ENCODE measurements at regions of chr11 and their contacts with region 1.

Region 1: DNA sequence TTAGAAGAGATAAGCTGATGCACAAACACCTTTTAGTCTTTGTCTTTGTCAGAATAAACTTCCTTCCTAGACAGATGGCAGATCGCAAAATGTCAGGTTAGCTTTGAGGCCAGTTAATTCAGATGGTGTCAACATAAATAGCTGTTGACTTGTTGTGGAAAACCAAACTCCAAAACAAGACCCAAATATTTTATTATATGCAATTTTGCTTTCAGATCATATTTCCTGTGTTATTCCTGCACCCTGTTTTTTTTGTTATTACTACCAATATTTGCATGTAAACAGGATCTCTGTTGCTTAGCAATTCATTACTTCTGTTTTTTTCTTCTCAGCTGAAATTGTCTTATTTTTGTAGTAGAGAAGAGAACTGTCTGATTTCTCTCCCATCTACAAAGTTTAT is 316.0 kb downstream of the ETS1 start:
- DNase-seq: no peak
- ATAC-seq: peak; percentile 47
- H3K4me3 Mint-ChIP-seq: peak overlapping the region; percentile 39
- H3K27ac Mint-ChIP-seq: peak overlapping the region; percentile 88
- H3K4me1 Mint-ChIP-seq: peaks cover 61% of the 10 kb centered on the region
- H3K27me3 Mint-ChIP-seq: no peaks in the 10 kb centered on the region
- CTCF ChIP-seq: no peak

Region 2: GRCh38 chr11:128116885-128117284 is 154.5 kb before region 1 on chr11:
- CTCF ChIA-PET with region 1: no interaction called
- POLR2A ChIA-PET with region 1: no interaction called
- intact Hi-C with region 1: no loop called
- DNase-seq: no peak
- ATAC-seq: no peak
- H3K4me3 Mint-ChIP-seq: no peak overlapping the region
- H3K27ac Mint-ChIP-seq: no peak overlapping the region
- H3K4me1 Mint-ChIP-seq: no peaks in the 10 kb centered on the region
- H3K27me3 Mint-ChIP-seq: peaks cover 29% of the 10 kb centered on the region
- CTCF ChIP-seq: no peak

Region 3: GRCh38 chr11:128261011-128261421 is 10.4 kb before region 1 on chr11:
- CTCF ChIA-PET with region 1: interaction called, 4 read pairs
- POLR2A ChIA-PET with region 1: interaction called, 11 read pairs
- intact Hi-C with region 1: loop called (anchors 1 kb)
- DNase-seq: no peak
- ATAC-seq: peak; percentile 22
- H3K4me3 Mint-ChIP-seq: no peak overlapping the region
- H3K27ac Mint-ChIP-seq: peak overlapping the region; percentile 85
- H3K4me1 Mint-ChIP-seq: peaks cover 84% of the 10 kb centered on the region
- H3K27me3 Mint-ChIP-seq: no peaks in the 10 kb centered on the region
- CTCF ChIP-seq: no peak

Region 4: DNA sequence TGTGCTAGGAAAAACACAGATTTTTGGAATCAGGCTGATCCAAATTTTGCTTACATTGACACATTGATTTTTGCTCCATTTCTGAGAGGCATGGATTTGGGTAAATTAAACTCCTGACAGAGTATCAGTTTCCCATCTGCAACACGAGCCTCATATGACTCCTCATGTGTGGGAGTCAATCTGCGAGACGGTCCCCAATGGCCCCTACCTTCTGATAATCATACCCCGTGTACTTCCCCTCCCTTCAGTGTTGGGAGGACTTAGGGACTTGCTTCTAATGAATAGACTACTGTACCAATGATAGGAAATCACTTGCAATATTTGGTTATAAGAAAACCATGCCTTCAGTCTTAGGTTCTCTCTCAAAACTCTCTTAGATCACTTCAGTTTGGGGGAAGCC is 13.2 kb after region 1 on chr11:
- CTCF ChIA-PET with region 1: interaction called, 3 read pairs
- POLR2A ChIA-PET with region 1: interaction called, 4 read pairs
- intact Hi-C with region 1: loop called (anchors 1 kb)
- DNase-seq: no peak
- ATAC-seq: peak; percentile 48
- H3K4me3 Mint-ChIP-seq: no peak overlapping the region
- H3K27ac Mint-ChIP-seq: peak overlapping the region; percentile 57
- H3K4me1 Mint-ChIP-seq: peaks cover 56% of the 10 kb centered on the region
- H3K27me3 Mint-ChIP-seq: no peaks in the 10 kb centered on the region
- CTCF ChIP-seq: no peak

Region 5: GRCh38 chr11:128841461-128842072 is 570.2 kb after region 1 on chr11:
- CTCF ChIA-PET with region 1: no interaction called
- POLR2A ChIA-PET with region 1: no interaction called
- intact Hi-C with region 1: loop called (anchors 5 kb)
- DNase-seq: no peak
- ATAC-seq: peak; percentile 77
- H3K4me3 Mint-ChIP-seq: peak overlapping the region; percentile 36
- H3K27ac Mint-ChIP-seq: peak overlapping the region; percentile 86
- H3K4me1 Mint-ChIP-seq: peaks cover 100% of the 10 kb centered on the region
- H3K27me3 Mint-ChIP-seq: no peaks in the 10 kb centered on the region
- CTCF ChIP-seq: no peak

Region 6: DNA sequence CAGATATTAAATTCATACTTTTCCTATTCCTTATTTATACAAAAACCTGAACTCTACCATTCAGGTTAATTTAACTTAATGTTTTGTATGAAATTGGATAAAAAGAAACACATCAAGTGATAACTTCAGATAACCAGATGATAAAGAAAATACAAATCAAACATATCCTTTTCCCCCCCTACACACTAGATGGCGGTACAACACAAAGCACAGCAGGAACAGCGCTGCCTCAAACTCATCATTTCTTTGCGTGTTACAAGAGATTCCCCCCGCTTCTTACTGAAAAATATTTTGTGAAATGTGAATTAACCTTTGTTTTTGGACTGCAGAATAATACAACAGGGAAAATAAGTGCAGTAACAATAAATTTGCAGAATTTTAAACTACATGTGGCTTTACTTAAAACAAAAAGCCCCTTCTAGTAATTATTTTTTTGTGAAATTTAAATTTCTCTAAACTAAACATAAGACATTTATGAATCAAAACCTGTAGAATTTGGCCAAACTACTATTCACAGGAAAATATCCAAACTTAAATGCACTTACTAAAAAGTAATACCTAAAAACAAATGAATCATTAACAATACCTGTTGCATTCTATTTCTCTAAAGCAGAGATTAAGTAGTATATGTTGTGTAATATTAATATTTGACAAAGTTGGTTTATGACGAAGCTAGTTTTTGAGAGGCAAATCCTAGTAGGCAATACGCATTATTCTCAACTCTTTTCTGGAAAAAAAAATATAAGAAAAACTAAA is 846.4 kb after region 1 on chr11:
- CTCF ChIA-PET with region 1: no interaction called
- POLR2A ChIA-PET with region 1: no interaction called
- intact Hi-C with region 1: no loop called
- DNase-seq: no peak
- ATAC-seq: no peak
- H3K4me3 Mint-ChIP-seq: no peak overlapping the region
- H3K27ac Mint-ChIP-seq: no peak overlapping the region
- H3K4me1 Mint-ChIP-seq: no peaks in the 10 kb centered on the region
- H3K27me3 Mint-ChIP-seq: no peaks in the 10 kb centered on the region
- CTCF ChIP-seq: peak; percentile 92